RWPE1 (cell line): ENCODE measurements at regions of chr7 and their contacts with region 1.

Region 1: DNA sequence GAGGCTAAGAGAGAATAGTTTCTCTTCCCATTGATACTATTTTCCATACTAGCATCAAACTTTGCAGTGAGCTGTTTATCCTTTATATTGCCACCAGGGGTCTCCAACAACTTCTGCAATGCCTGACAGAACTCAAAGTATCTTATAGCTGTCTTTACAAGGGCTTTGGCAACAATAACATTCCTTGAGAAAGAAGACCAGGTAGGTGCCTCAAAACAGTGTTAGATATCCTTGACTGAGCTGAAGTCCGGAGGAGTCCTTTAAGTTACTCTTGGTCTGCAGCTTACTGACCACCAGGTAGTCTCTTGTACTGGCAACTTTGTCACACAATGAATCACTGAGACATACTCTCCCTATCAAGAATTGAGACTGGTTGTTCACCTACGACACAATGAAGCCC is 30.0 kb upstream of the TES start:
- DNase-seq: peak; percentile 47
- H3K27ac ChIP-seq: no peak overlapping the region
- CTCF ChIP-seq: peak; percentile 89

Region 2: DNA sequence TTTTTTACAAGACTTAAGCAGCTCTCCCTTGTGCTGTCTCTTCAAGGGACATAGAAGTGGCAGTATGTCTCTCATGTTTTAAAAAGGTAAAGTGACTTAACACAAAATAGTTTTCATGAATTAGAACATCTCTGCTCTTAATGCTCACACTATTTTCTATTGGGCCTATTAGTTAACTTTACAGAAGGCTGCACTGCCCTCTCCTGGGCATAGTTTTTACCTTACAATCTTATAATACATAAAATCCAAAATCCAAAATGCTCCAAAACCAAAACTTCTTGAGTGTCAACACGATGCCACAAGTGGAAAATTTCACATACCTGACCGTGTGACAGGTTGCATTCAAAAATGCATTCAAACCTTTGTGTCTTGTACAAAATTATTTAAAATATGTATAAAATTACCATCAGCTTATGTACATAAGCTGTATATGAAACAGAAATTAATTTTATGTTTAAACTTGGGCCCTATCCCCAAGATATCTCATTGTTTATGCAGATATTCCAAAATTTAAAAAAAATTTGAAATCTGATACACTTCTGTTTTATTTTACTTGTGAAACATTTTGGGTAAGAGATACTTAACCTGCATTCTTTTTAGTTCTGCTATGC is 55.8 kb after region 1 on chr7:
- CTCF ChIA-PET with region 1: interaction called, 25 read pairs
- POLR2A ChIA-PET with region 1: no interaction called
- DNase-seq: peak; percentile 35
- H3K27ac ChIP-seq: no peak overlapping the region
- CTCF ChIP-seq: peak; percentile 69

Region 3: DNA sequence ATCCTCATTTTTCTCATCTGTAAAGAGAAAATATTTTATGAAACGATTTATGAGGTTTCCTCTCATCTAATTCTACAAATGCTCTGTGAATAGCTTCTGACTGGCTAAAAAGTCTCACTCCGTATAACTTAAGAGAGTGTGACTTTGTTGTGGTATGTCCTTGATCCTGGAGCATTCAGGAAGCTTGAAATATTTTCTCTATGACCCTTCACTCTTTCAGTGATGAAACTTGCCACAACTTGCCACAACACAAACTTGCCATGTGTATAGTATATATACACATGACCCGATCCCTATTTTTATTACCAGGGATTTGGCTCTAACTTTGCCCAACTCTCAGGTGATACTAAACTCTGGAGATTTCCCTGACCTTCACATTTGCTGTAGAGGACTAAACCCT is 104.1 kb after region 1 on chr7:
- CTCF ChIA-PET with region 1: no interaction called
- POLR2A ChIA-PET with region 1: no interaction called
- DNase-seq: peak; percentile 36
- H3K27ac ChIP-seq: no peak overlapping the region
- CTCF ChIP-seq: no peak